AG04449 (cell line): ENCODE measurements at regions of chr5 and their contacts with region 1.

Region 1: DNA sequence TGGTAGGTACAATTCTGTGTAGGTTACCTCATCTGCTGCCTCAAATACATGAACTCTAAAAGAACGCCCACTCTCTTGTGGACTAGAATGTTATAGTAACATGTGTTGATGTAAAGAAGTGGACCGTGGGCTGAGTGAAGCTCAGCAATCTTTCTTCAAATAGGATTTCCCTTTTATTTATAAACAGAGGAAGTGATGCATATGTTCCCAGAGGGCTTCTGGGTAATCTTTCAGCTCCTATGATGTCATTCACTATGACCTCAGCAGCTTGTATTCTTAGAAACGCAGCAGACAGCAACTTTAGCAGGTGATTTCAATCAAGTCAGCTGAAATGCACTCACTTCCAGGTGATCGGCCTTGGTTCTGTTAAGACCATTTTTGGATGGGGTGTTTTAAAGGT is 14.4 kb downstream of the F2RL2 start:
- DNase-seq: no peak
- H3K4me3 ChIP-seq: no peak overlapping the region
- CTCF ChIP-seq: no peak

Region 2: GRCh38 chr5:76547242-76547890 is 61.5 kb before region 1 on chr5:
- CTCF ChIA-PET with region 1: no interaction called
- POLR2A ChIA-PET with region 1: no interaction called
- DNase-seq: no peak
- H3K4me3 ChIP-seq: no peak overlapping the region
- CTCF ChIP-seq: no peak

Region 3: DNA sequence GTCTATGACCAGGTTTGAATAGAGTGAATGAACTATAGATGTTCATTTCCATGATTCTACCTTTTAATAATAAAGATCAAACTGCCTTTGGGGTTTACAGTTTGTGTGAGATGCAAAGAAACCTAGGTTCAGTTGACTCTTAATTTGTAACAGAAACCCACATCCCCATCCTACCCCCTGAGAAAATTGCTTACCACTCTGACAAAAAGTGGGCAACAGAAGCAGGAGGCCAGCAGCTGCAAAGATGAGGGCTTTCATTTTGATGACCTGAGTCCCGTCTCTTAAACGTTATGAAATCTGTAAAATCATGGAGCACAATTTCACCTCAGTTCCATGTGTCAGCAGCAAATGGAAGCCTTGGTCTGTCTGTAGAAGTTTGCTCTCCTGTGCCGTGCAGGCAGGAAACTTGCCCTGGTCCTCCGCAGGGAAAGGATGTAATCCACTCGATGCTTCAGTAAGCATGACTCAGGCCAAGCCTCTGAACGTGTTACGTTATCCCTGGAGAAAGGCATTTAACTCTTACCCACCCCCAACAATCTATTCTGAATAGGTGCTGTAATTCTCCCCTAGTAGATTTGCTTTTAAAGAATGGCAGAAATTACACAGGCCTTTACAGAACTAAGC is 14.3 kb after region 1 on chr5 and contains the start of gene F2RL2:
- CTCF ChIA-PET with region 1: interaction called, 11 read pairs
- POLR2A ChIA-PET with region 1: no interaction called
- DNase-seq: no peak
- H3K4me3 ChIP-seq: peak within 1 kb of the TSS; percentile 60
- CTCF ChIP-seq: no peak

Region 4: GRCh38 chr5:76754668-76755078 is 145.8 kb after region 1 on chr5:
- CTCF ChIA-PET with region 1: no interaction called
- POLR2A ChIA-PET with region 1: no interaction called
- DNase-seq: no peak
- H3K4me3 ChIP-seq: no peak overlapping the region
- CTCF ChIP-seq: no peak

Region 5: DNA sequence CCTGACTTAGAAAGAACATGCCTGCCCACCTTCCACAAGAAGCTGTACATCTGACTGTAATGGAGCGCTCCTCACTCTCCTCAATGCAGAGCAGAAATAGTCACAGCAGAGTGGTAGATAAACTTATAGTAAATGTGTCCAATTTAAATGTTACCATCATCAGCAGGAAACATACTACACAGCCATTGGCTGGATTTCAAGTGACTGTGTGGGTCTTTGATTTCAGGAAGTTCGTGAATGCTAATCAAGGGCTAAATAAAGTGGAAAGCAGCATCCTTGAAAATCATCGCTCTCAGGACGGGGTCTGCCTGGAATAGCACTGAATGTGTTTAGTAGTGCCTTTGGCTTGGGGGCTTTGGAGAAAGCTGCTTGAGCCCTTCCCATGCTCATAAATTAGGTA is 311.7 kb after region 1 on chr5:
- CTCF ChIA-PET with region 1: no interaction called
- POLR2A ChIA-PET with region 1: no interaction called
- DNase-seq: no peak
- H3K4me3 ChIP-seq: no peak overlapping the region
- CTCF ChIP-seq: no peak